HEK293T (cell line): ENCODE measurements at regions of chr6 and their contacts with region 1.

Region 1: GRCh38 chr6:132669690-132670291 is 10.8 kb upstream of the TAAR1 start:
- DNase-seq: peak; percentile 50

Region 2: GRCh38 chr6:132715204-132715603 is 45.4 kb after region 1 on chr6:
- CTCF ChIA-PET with region 1: interaction called, 10 read pairs
- POLR2A ChIA-PET with region 1: no interaction called
- DNase-seq: peak; percentile 69